OCI-LY7 (cell line): ENCODE measurements at regions of chr14 and their contacts with region 1.

Region 1: GRCh38 chr14:75487155-75487671 is 35.1 kb upstream of the BATF start:
- DNase-seq: peak; percentile 91
- H3K4me3 ChIP-seq: peak overlapping the region; percentile 18
- H3K27ac ChIP-seq: peak overlapping the region; percentile 81
- H3K4me1 ChIP-seq: peaks cover 37% of the 10 kb centered on the region
- CTCF ChIP-seq: no peak

Region 2: DNA sequence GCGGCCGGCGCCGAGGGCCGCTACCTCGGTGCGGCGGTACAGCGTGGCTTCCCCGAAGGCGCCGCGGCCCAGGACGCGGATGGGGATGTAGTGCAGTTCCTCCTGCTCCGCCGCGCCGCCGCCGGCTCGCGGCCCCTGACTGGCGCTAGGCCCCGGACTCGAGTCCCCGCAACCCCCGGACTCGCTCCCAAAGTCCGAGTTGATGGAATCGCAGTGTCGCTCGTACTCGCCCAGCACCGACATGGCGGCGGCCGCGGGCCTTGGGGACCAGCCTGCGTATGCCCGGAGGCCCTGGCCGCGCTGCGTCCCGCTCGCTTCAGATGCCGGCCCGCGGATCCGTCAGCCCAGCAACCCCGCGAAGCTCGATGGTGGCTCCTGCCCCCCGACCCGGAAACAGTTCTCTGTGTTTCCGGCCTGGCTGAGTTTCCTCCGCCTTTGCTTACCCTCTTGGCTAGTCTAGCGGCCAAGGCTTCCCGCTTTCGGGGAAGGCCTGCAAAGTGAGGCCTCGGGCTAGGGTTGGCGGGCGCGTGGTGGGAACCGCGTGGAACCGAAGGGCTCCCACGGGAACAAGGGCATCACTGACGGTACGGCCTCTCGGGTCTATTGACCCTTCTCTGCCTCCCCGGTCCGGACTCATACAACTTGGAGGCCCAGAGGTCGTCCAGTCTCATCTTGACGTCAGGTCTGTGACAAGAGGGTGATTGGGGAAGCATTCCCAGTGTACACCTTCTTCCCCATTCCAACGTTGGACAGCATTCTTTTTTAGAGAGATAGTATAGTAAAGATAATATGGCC is 360.3 kb before region 1 on chr14 and contains the start of gene NEK9:
- CTCF ChIA-PET with region 1: no interaction called
- POLR2A ChIA-PET with region 1: interaction called, 3 read pairs
- intact Hi-C with region 1: loop called (anchors 2 kb)
- DNase-seq: peak; percentile 92
- H3K4me3 ChIP-seq: peak within 1 kb of the TSS; percentile 78
- H3K27ac ChIP-seq: peak within 1 kb of the TSS; percentile 69
- H3K4me1 ChIP-seq: peaks cover 28% of the 10 kb centered on the region
- CTCF ChIP-seq: 0 out of 2 replicates have a peak, but pooled peaks have one; percentile 24
- total RNA-seq, gene NEK9: 58.3 and 65.8 TPM in 2 replicates

Region 3: GRCh38 chr14:75293920-75294642 is 193.1 kb before region 1 on chr14:
- CTCF ChIA-PET with region 1: no interaction called
- POLR2A ChIA-PET with region 1: no interaction called
- intact Hi-C with region 1: no loop called
- DNase-seq: peak; percentile 92
- H3K4me3 ChIP-seq: peak overlapping the region; percentile 74
- H3K27ac ChIP-seq: no peak overlapping the region
- H3K4me1 ChIP-seq: peaks cover 21% of the 10 kb centered on the region
- CTCF ChIP-seq: no peak

Region 4: GRCh38 chr14:75427482-75428229 is 59.6 kb before region 1 on chr14 and contains the start of gene JDP2:
- CTCF ChIA-PET with region 1: interaction called, 9 read pairs
- POLR2A ChIA-PET with region 1: interaction called, 10 read pairs
- intact Hi-C with region 1: loop called (anchors 2 kb)
- DNase-seq: peak; percentile 80
- H3K4me3 ChIP-seq: peak within 1 kb of the TSS; percentile 90
- H3K27ac ChIP-seq: peak within 1 kb of the TSS; percentile 77
- H3K4me1 ChIP-seq: peaks cover 46% of the 10 kb centered on the region
- CTCF ChIP-seq: peak; percentile 33; the same call in 1 of the 2 replicates
- total RNA-seq, gene JDP2: 53.7 and 62.7 TPM in 2 replicates

Region 5: GRCh38 chr14:75440733-75441477 is 46.3 kb before region 1 on chr14:
- CTCF ChIA-PET with region 1: interaction called, 9 read pairs
- POLR2A ChIA-PET with region 1: interaction called, 11 read pairs
- intact Hi-C with region 1: loop called (anchors 1 kb)
- DNase-seq: peak; percentile 51
- H3K4me3 ChIP-seq: peak overlapping the region; percentile 64
- H3K27ac ChIP-seq: peak overlapping the region; percentile 84
- H3K4me1 ChIP-seq: peaks cover 93% of the 10 kb centered on the region
- CTCF ChIP-seq: no peak

Region 6: DNA sequence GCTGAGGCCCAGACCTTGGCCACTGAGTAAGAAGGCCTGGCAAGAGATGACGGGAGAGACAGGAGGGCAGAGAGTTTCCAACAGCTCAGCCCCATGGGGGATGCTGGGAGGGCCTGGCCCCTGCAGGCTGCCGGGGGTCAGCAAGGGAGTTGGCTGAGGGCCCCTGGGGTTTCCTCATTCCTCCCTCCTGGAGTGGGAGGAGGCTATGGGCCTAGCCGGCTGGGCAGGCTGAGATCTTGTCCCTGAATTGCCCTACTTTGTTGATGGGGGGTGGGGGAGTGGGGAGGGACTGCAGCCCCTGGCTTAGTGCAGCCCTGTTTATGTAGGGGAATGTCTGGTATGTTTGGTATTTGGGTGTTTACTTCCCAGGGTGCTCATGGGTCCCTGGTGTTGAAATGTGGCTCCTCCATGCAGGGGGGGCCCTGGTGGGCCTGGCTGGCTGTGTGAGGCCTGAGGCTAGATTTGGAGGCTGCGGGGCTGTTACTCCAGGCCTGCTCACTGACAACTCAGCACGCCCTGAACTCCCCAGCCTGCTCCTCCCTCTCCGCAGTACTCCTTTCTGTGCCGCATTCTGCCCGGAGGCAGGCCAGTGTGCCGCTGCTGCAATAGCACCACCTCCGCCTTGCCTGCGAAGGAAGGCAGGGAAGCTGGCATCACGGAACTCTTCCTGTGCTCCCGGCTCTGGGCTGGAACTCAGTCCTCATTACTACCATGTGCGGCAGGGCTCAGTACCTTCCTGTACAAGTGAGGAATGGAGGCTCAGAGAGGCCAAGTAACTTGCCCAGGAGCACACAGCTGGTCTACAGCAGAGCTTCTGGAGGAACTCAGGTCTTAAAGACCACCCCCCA is 34.1 kb before region 1 on chr14:
- CTCF ChIA-PET with region 1: interaction called, 5 read pairs
- POLR2A ChIA-PET with region 1: no interaction called
- intact Hi-C with region 1: loop called (anchors 1 kb)
- DNase-seq: no peak
- H3K4me3 ChIP-seq: no peak overlapping the region
- H3K27ac ChIP-seq: peak overlapping the region; percentile 57
- H3K4me1 ChIP-seq: peaks cover 69% of the 10 kb centered on the region
- CTCF ChIP-seq: no peak

Region 7: DNA sequence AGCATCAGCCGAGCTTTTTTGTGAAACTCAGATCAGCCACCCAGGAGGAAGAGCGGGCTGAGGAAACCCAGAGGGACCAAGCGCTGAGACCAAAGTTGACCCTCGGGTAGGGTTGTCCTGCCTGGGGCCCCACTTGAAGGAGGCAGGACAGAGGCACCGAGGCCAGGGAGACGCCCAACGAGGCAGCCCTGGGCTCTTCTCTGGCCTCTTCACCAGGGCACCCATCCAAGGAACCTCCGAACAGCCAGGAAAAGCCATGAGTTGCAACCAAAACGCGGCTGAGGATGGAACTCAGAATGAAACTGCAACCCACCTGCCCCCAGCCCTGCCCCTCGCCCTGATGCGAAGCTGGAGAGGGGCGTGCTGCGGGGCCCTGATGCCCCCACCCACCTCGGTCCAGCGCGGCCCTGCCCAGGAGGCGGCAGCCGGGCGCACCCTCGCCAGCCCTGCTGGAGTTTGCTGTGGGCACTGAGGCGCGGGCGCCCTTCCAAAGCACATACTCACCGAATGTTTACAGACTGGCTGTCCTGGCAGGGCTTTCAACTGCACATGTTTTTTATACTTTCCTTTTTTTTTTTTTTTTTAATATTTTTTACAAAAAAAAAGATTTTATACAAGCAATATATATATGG is 17.5 kb before region 1 on chr14:
- CTCF ChIA-PET with region 1: interaction called, 3 read pairs
- POLR2A ChIA-PET with region 1: interaction called, 12 read pairs
- intact Hi-C with region 1: loop called (anchors 1 kb)
- DNase-seq: no peak
- H3K4me3 ChIP-seq: peak overlapping the region; percentile 50
- H3K27ac ChIP-seq: peak overlapping the region; percentile 98
- H3K4me1 ChIP-seq: peaks cover 95% of the 10 kb centered on the region
- CTCF ChIP-seq: no peak

Region 8: GRCh38 chr14:75514673-75515628 is 27.7 kb after region 1 on chr14:
- CTCF ChIA-PET with region 1: no interaction called
- POLR2A ChIA-PET with region 1: no interaction called
- intact Hi-C with region 1: no loop called
- DNase-seq: peak; percentile 24
- H3K4me3 ChIP-seq: peak overlapping the region; percentile 25
- H3K27ac ChIP-seq: no peak overlapping the region
- H3K4me1 ChIP-seq: peaks cover 16% of the 10 kb centered on the region
- CTCF ChIP-seq: peak; percentile 63

Region 9: DNA sequence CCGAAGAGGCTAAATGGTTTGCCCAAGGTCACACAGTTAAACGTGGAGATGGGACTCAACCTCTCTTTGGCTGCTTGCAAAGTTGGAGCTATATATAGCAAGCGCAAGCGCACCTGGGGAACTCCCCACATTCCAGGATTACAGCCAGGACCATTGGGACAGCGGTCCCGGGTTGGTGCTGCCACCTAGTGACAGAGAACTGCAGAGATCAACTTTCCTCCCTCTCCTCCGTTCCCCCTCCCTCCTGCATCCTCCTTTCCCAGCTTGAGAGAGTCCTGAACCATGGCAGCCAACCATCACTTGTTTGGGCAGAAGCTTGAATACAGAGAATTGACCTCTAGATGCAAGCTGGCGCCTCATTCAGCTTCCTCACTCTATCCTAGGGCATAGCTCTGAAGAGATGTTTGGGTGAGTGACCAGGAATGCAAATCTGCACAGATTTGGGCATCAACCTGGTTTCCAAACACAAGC is 73.8 kb after region 1 on chr14:
- CTCF ChIA-PET with region 1: no interaction called
- POLR2A ChIA-PET with region 1: no interaction called
- intact Hi-C with region 1: loop called (anchors 2 kb)
- DNase-seq: peak; percentile 53
- H3K4me3 ChIP-seq: no peak overlapping the region
- H3K27ac ChIP-seq: no peak overlapping the region
- H3K4me1 ChIP-seq: no peaks in the 10 kb centered on the region
- CTCF ChIP-seq: peak; percentile 97